Psoas muscle (tissue), 8 donors: ENCODE measurements at regions of chr3 and their contacts with region 1.

Region 1: GRCh38 chr3:27134165-27134796 is 234.9 kb downstream of the NEK10 start:
- DNase-seq: peak; percentile 60 to 75
- ATAC-seq: peak; percentile 80 to 91 (median 88)
- H3K4me3 ChIP-seq: no peak overlapping the region
- H3K27ac ChIP-seq: peak overlapping the region; percentile 43
- H3K4me1 ChIP-seq: peaks cover 18% of the 10 kb centered on the region
- H3K27me3 ChIP-seq: no peaks in the 10 kb centered on the region
- CTCF ChIP-seq: peak; percentile 91

Region 2: DNA sequence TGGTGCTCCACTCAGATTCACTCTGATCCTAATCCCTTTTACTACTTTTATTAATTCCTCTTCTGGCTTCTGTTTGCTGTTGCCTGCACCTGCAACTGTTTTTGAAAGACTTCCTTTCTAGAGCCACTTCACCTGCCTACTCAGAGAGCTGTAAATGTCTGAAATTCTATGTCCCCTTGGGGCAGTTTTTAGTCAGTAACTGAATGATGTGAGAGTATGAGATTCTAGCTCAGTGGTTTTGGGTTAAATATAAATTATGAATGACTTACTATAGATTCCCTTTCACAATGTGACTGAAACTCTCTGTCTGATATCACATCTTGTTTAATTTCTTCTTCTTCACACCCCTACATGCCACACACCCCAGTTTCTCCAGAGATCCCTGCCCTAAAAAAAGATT is 559.5 kb before region 1 on chr3:
- intact Hi-C with region 1: no loop called
- DNase-seq: no peak
- ATAC-seq: no peak
- H3K4me3 ChIP-seq: no peak overlapping the region
- H3K27ac ChIP-seq: no peak overlapping the region
- H3K4me1 ChIP-seq: no peaks in the 10 kb centered on the region
- H3K27me3 ChIP-seq: no peaks in the 10 kb centered on the region
- CTCF ChIP-seq: no peak

Region 3: GRCh38 chr3:27253831-27254230 is 119.5 kb after region 1 on chr3:
- intact Hi-C with region 1: loop called in 1 of 2 experiments (anchors 2 kb)
- DNase-seq: peak in 1 of 2 donors; percentile 44
- ATAC-seq: peak; percentile 57 to 81 (median 71)
- H3K4me3 ChIP-seq: no peak overlapping the region
- H3K27ac ChIP-seq: no peak overlapping the region
- H3K4me1 ChIP-seq: no peaks in the 10 kb centered on the region
- H3K27me3 ChIP-seq: no peaks in the 10 kb centered on the region
- CTCF ChIP-seq: peak; percentile 32

Region 4: DNA sequence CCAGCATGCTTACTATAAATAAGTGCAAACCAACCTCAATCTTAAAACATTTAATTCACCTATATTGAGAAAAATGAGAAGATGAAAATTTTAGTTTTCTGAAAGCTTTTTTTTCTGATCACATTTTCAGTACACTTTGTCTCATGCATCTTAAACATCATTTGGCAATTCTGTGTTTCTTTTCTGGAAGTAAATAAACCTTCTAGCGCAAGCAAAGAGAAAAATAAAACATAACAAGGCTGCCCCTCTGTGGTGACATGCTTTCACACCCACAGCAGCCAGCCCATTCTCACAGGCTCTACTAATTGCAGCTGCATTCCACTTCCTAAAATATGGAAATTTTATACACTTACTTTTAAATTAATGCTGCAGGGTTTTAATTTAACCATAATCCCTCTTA is 144.8 kb after region 1 on chr3:
- intact Hi-C with region 1: loop called in 1 of 2 experiments (anchors 2 kb)
- DNase-seq: no peak
- ATAC-seq: no peak
- H3K4me3 ChIP-seq: no peak overlapping the region
- H3K27ac ChIP-seq: no peak overlapping the region
- H3K4me1 ChIP-seq: no peaks in the 10 kb centered on the region
- H3K27me3 ChIP-seq: no peaks in the 10 kb centered on the region
- CTCF ChIP-seq: peak; percentile 39

Region 5: GRCh38 chr3:27454914-27455313 is 320.6 kb after region 1 on chr3:
- intact Hi-C with region 1: no loop called
- DNase-seq: no peak
- ATAC-seq: peak in 3 of 4 donors; percentile 17 to 52 (median 41)
- H3K4me3 ChIP-seq: peak overlapping the region; percentile 52
- H3K27ac ChIP-seq: peak overlapping the region; percentile 50
- H3K4me1 ChIP-seq: no peaks in the 10 kb centered on the region
- H3K27me3 ChIP-seq: no peaks in the 10 kb centered on the region
- CTCF ChIP-seq: no peak

Region 6: GRCh38 chr3:27596334-27596841 is 462.1 kb after region 1 on chr3:
- intact Hi-C with region 1: no loop called
- DNase-seq: no peak
- ATAC-seq: no peak
- H3K4me3 ChIP-seq: no peak overlapping the region
- H3K27ac ChIP-seq: no peak overlapping the region
- H3K4me1 ChIP-seq: peaks cover 3% of the 10 kb centered on the region
- H3K27me3 ChIP-seq: no peaks in the 10 kb centered on the region
- CTCF ChIP-seq: no peak